ENCODE measurements at regions of chr1 and their contacts with region 1.

Region 1: DNA sequence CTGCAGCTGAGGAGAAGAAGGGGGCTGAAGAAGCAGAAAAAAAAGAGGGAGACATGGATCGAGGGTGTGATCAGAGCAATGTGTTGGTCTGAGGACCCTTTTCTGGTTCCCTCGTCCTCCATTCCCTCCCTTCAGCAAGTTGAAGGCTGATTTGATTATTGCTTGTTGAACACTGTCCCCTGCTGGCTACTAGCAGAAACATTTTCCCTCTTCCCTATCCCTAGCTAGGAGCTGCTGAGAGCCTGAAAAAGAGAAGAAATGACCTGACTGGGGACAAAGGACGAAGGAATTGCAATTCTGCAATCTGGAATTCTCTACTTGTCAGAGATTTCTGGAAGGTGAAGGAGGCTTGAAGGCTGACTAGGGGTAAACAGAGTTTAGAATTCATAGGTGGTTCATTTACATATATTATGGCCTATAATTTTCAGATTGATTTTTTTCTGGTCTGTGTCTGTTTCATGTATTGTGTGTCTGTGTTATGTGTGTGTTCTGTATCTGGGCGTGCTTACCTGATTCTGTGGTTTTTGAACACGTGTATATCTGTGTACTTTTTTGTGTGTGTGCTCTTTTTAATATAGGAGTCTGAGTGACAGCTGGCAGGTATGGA is 9.8 kb downstream of the NHLH1 start:
- DNase-seq: peak; percentile 63 to 84
- H3K4me3 ChIP-seq: no peak overlapping the region
- H3K4me1 ChIP-seq: peaks cover 12% of the 10 kb centered on the region
- H3K27me3 ChIP-seq: no peaks in the 10 kb centered on the region

Region 2: DNA sequence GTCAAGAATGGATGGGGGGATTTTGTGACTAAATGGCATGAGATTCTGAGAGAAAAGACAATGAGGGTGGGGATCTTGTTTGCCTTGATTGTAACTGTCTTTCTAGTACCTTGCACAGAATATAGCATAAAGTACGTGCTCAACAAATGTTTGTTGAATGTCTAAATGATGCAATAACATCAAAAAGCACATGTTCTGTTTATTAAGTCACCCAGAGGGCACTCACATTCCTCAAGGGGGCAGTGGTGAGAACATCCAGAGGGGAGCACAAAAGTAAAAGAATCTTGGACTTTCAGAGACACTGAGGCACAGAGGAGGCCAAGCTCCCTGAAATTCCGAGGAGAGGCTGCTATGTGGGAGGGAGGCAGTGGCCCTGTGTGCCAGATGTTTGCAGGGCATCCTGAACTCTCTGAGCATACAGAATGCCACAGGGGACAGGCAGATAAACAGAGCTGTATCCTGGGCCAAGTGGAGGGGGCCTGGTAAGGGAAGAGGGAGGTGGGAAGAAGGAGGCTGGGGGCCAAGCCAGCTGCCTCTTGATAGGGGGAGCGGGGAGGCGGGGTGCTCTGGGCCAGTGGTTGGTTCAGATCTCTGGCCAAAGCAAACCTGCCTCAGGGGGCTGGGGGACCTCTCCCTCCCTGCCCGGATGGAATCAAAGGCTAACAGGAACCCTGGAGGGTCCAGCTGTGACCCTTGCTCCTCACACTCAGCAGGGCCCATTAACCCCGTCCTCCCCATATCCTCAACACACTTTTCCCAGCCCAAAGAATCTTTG is 267.6 kb before region 1 on chr1:
- in situ Hi-C with region 1: loop called (anchors 5 kb)
- DNase-seq: peak in 1 of 2 experiments; percentile 53
- H3K4me3 ChIP-seq: no peak overlapping the region
- H3K4me1 ChIP-seq: no peaks in the 10 kb centered on the region
- H3K27me3 ChIP-seq: no peaks in the 10 kb centered on the region

Measured in HAP-1 (cell line).